ENCODE measurements at regions of chr4 and their contacts with region 1.

Region 1: GRCh38 chr4:54971474-54971950 is 153.9 kb downstream of the KDR start:
- DNase-seq: peak; percentile 77
- H3K4me3 ChIP-seq: no peak overlapping the region
- H3K27ac ChIP-seq: no peak overlapping the region
- H3K4me1 ChIP-seq: no peaks in the 10 kb centered on the region
- H3K27me3 ChIP-seq: peaks cover 0 to 2% of the 10 kb centered on the region in 2 experiments
- CTCF ChIP-seq: peak; percentile 46 to 52
- POLR2A ChIP-seq: no peak

Region 2: GRCh38 chr4:54961357-54961975 is 10.0 kb before region 1 on chr4:
- CTCF ChIA-PET with region 1: interaction called, 42 read pairs
- POLR2A ChIA-PET with region 1: no interaction called
- dilution Hi-C with region 1: no loop called
- intact Hi-C with region 1: no loop called
- DNase-seq: peak; percentile 69
- H3K4me3 ChIP-seq: no peak overlapping the region
- H3K27ac ChIP-seq: no peak overlapping the region
- H3K4me1 ChIP-seq: no peaks in the 10 kb centered on the region
- H3K27me3 ChIP-seq: peaks cover 5 to 14% of the 10 kb centered on the region in 2 experiments
- CTCF ChIP-seq: peak; percentile 46 to 50
- POLR2A ChIP-seq: no peak

Region 3: DNA sequence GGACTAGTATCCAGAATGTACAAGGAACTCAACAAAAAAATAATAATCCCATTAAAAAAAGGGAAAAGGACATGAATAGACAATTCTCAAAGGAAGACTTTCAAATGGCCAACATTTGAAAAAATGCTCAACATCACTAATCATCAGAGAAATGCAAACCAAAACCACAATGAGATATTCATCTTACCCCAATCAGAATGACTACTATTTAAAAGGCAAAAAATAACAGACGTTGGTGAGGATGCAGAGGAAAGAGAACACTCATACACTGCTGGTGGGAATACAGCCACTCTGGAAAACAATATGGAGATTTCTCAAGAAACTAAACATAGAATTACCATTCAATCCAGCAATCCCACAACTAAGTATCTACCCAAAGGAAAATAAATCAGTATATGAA is 20.8 kb after region 1 on chr4:
- CTCF ChIA-PET with region 1: no interaction called
- POLR2A ChIA-PET with region 1: no interaction called
- dilution Hi-C with region 1: no loop called
- intact Hi-C with region 1: no loop called
- DNase-seq: no peak
- H3K4me3 ChIP-seq: no peak overlapping the region
- H3K27ac ChIP-seq: no peak overlapping the region
- H3K4me1 ChIP-seq: no peaks in the 10 kb centered on the region
- H3K27me3 ChIP-seq: no peaks in the 10 kb centered on the region
- CTCF ChIP-seq: no peak
- POLR2A ChIP-seq: no peak

Region 4: DNA sequence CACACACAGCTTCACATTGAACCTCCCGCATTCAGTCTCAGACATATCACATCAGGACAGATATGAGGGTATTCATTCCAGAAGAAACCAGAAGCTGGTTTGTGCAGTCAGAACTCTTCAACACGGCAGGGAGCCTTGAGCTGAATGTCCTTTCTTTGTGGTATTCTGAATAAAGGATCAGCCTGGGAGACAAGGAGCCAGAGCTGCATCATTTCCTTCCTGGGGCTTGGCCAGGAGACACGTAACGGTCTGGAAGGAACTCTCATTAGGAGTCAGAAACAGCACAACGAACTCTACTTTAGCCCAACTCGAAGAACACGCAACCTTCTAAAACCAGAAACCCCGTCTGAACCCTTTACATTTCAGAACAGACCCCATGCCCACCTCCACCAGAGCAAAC is 107.5 kb after region 1 on chr4:
- CTCF ChIA-PET with region 1: interaction called, 15 read pairs
- POLR2A ChIA-PET with region 1: no interaction called
- dilution Hi-C with region 1: no loop called
- intact Hi-C with region 1: loop called (anchors 2 kb)
- DNase-seq: peak; percentile 92
- H3K4me3 ChIP-seq: peak overlapping the region in 1 of 3 experiments; percentile 28
- H3K27ac ChIP-seq: peak overlapping the region; percentile 99
- H3K4me1 ChIP-seq: peaks cover 48% of the 10 kb centered on the region
- H3K27me3 ChIP-seq: no peaks in the 10 kb centered on the region
- CTCF ChIP-seq: no peak
- POLR2A ChIP-seq: peak; percentile 79

Region 5: DNA sequence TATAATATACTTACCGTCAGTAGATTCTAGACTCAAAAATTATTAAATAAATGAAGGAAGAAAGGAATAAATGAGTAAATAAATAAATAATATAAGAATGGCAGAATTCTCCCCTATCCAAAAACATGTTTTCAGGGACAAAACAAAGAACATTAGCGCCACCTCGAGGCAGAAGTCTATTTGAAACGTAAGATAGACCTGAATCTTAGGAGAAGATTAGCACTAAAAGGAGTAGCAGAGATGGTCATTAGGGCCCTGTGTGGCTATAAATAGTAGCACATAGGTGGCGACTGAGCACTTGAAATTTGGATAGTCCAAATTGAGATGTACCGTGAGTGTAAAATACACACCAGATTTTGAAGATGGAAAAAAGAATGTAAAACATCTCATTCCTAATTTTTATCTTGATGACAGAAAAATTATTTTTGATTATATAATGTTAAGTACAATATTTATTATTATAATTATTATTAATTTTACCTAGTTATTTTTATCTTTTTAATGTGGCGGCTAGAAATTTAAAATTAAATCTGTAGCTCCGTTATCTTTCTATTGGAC is 350.3 kb after region 1 on chr4:
- CTCF ChIA-PET with region 1: interaction called, 85 read pairs
- POLR2A ChIA-PET with region 1: no interaction called
- dilution Hi-C with region 1: loop called (anchors 25 kb)
- intact Hi-C with region 1: loop called (anchors 1 kb)
- DNase-seq: peak; percentile 82
- H3K4me3 ChIP-seq: no peak overlapping the region
- H3K27ac ChIP-seq: no peak overlapping the region
- H3K4me1 ChIP-seq: peaks cover 41% of the 10 kb centered on the region
- H3K27me3 ChIP-seq: no peaks in the 10 kb centered on the region
- CTCF ChIP-seq: peak; percentile 45 to 49
- POLR2A ChIP-seq: no peak

Region 6: DNA sequence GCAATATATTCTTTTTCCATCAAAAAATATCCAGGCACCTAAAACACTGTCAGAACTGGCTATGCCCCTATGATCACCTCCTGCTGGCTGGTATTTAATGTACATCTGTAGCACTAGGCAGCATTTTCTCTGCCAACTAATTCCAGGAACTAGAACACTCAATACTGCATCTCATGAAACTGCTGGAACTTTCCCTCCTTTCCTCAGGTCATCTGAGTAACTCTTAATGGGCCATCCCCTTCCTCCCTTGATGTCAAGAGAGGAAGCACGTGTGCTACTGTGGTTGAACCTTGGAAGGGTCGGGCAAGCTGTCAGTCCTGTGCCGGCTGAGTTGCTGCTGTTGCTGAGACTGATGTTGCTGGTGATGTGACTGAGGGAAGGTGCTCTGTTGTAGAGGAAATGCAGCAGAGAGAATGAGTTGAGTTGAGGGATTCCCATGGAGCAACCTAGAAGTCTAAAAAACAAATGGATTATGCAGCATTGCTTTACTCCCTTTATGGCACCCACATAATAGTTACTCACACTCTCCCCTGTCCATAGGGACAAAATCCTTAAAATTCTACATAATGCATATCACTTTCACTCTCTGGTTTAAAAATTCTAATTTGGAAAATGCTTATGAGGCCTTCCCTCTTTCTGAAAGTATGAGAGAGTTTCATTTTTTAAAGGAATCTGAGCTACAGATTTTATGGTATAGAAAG is 463.8 kb after region 1 on chr4:
- CTCF ChIA-PET with region 1: interaction called, 6 read pairs
- POLR2A ChIA-PET with region 1: no interaction called
- dilution Hi-C with region 1: no loop called
- intact Hi-C with region 1: loop called (anchors 10 kb)
- DNase-seq: peak; percentile 69
- H3K4me3 ChIP-seq: no peak overlapping the region
- H3K27ac ChIP-seq: no peak overlapping the region
- H3K4me1 ChIP-seq: peaks cover 13% of the 10 kb centered on the region
- H3K27me3 ChIP-seq: no peaks in the 10 kb centered on the region
- CTCF ChIP-seq: peak; percentile 24 to 30
- POLR2A ChIP-seq: no peak

Region 7: DNA sequence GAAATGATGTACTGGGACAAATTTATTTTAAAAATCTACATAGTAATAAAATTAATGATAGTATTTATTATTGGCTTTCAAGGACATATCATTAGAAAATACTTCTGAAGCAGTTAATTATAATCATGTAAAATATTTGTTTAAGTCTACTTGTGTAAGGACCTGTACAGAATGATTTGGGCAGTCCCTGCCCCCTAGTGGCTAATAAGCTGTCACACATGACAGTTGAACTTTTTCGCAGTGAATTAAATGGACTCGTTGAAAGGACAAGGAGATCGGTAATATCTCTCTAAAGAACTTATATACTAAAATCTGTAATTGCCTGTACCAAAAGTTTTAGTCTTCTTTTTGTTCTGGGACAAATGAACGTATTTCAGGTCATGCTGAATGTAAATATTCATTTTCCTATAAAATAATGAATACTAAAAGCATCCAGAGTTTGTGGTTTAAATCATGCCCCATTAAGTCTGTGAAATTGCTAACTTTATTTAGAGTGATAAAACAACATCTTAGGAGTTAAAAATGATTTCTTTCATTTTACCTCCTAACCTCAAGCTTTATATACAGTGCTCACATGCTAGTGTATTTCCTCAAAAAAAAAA is 895.6 kb after region 1 on chr4:
- CTCF ChIA-PET with region 1: interaction called, 24 read pairs
- POLR2A ChIA-PET with region 1: no interaction called
- dilution Hi-C with region 1: no loop called
- intact Hi-C with region 1: loop called (anchors 10 kb)
- DNase-seq: peak; percentile 78
- H3K4me3 ChIP-seq: no peak overlapping the region
- H3K27ac ChIP-seq: peak overlapping the region; percentile 55
- H3K4me1 ChIP-seq: peaks cover 21% of the 10 kb centered on the region
- H3K27me3 ChIP-seq: no peaks in the 10 kb centered on the region
- CTCF ChIP-seq: peak; percentile 65 to 68
- POLR2A ChIP-seq: no peak

Measured in endothelial cell of umbilical vein (primary cell).